Caco-2 (cell line): ENCODE measurements at regions of chr6 and their contacts with region 1.

Region 1: GRCh38 chr6:132669690-132670291 is 10.8 kb upstream of the TAAR1 start:
- DNase-seq: peak in 1 of 2 experiments; percentile 16
- H3K4me3 ChIP-seq: no peak overlapping the region
- H3K4me3 Mint-ChIP-seq: peak overlapping the region; percentile 22
- H3K27ac Mint-ChIP-seq: peak overlapping the region; percentile 40
- H3K4me1 ChIP-seq: peaks cover 42% of the 10 kb centered on the region
- H3K4me1 Mint-ChIP-seq: peaks cover 36% of the 10 kb centered on the region
- H3K27me3 ChIP-seq: no peaks in the 10 kb centered on the region
- H3K27me3 Mint-ChIP-seq: no peaks in the 10 kb centered on the region
- CTCF ChIP-seq: peak in 1 of 2 experiments; percentile 38

Region 2: DNA sequence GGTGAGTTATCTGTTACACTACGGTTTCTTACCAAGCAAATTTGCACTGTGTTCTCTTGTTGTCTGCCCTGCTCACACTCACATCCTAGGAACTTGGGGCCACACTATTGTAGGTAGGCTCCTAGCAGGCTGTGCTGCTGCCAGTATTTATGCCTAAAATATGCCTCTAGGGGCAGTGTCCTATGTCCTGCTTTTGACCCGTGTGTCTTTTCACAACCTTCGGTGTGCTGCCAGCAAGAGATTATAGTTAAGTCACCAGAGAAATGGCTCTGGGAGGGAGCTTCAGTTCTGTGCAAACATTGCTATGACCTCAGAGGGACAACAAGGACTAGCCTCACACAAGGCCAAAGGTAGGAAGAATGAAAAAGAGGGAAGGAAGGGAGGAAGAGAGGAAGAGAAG is 71.3 kb before region 1 on chr6:
- CTCF ChIA-PET with region 1: no interaction called
- POLR2A ChIA-PET with region 1: no interaction called
- intact Hi-C with region 1: loop called (anchors 1 kb)
- DNase-seq: peak; percentile 56 to 59
- H3K4me3 ChIP-seq: no peak overlapping the region
- H3K4me3 Mint-ChIP-seq: no peak overlapping the region
- H3K27ac Mint-ChIP-seq: no peak overlapping the region
- H3K4me1 ChIP-seq: peaks cover 6% of the 10 kb centered on the region; the same call in 1 of the 2 replicates
- H3K4me1 Mint-ChIP-seq: peaks cover 7% of the 10 kb centered on the region
- H3K27me3 ChIP-seq: no peaks in the 10 kb centered on the region
- H3K27me3 Mint-ChIP-seq: no peaks in the 10 kb centered on the region
- CTCF ChIP-seq: peak; percentile 35 to 38

Region 3: DNA sequence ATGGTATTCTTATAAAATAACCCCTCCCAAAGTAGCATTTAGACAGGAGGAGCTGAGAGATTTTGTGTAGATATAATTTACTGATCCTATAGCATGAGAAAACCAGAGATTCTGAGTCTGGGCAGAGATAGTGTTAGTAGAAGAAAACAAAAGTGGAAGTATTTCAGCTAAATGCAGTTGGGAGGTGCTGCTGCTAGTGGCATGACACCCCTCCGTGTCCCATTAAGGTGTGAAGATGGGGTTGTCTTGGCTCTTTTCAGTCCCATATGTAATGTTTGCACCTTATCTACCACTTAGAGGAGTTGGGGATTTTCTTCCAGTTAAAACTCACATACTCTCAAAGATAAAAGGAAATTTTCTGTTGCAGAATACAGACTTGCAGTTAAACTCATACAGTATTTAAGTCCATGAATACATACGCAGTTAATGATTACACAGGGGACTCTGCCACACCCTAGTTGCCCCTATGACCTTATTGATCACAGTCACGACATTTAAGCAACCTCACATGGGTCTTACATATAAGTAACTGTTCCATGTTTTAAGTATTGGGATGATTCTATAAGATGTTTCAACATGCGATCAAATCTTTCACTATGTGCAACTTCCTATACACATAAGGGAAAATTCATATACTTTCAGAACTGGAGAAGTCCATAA is 57.2 kb before region 1 on chr6:
- CTCF ChIA-PET with region 1: no interaction called
- POLR2A ChIA-PET with region 1: no interaction called
- intact Hi-C with region 1: loop called (anchors 2 kb)
- DNase-seq: peak; percentile 46 to 53
- H3K4me3 ChIP-seq: no peak overlapping the region
- H3K4me3 Mint-ChIP-seq: peak overlapping the region; percentile 48
- H3K27ac Mint-ChIP-seq: peak overlapping the region; percentile 40
- H3K4me1 ChIP-seq: peaks cover 37% of the 10 kb centered on the region
- H3K4me1 Mint-ChIP-seq: peaks cover 31% of the 10 kb centered on the region
- H3K27me3 ChIP-seq: no peaks in the 10 kb centered on the region
- H3K27me3 Mint-ChIP-seq: no peaks in the 10 kb centered on the region
- CTCF ChIP-seq: no peak

Region 4: DNA sequence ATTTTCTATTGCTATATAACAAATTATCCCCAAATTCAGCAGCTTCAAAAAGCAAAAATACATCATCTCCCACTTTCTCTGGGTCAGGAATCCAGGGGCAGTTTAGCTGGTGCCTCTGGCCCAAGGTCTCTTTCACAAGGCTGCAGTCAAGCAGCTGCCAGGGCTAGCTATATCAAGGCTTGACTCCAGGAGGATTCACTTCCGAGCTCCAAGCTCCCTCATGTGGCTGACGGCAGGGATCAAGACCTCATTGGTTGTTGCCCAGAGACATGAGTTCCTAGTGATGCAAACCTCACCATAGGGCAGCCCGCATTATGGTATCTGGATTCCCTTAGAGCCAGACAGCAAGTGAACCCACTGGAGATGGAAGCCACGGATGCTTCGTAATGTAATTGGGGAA is 45.4 kb after region 1 on chr6:
- CTCF ChIA-PET with region 1: interaction called, 14 read pairs
- POLR2A ChIA-PET with region 1: no interaction called
- intact Hi-C with region 1: loop called (anchors 1 kb)
- DNase-seq: peak; percentile 73 to 81
- H3K4me3 ChIP-seq: no peak overlapping the region
- H3K4me3 Mint-ChIP-seq: no peak overlapping the region
- H3K27ac Mint-ChIP-seq: no peak overlapping the region
- H3K4me1 ChIP-seq: peaks cover 9% of the 10 kb centered on the region
- H3K4me1 Mint-ChIP-seq: no peaks in the 10 kb centered on the region
- H3K27me3 ChIP-seq: no peaks in the 10 kb centered on the region
- H3K27me3 Mint-ChIP-seq: no peaks in the 10 kb centered on the region
- CTCF ChIP-seq: peak; percentile 53 to 70

Region 5: DNA sequence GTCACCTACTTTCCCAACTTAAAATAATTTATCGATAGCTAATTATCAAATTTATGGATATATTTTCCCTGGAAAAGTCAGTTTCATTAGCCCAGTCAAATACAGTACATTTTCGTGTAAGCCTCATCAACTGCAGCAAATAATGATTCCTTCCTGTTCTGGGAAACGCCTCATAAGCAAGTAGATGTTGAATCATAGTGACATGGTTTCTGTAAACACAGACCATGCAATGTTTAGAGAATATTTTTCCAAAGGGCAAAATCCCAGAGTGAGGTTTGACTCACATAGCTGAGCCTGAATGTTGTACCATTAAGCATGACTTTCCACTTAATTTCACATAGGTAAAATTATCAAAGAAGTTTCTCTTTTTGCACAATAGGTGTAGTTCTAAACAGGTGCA is 60.8 kb after region 1 on chr6:
- CTCF ChIA-PET with region 1: no interaction called
- POLR2A ChIA-PET with region 1: no interaction called
- intact Hi-C with region 1: no loop called
- DNase-seq: no peak
- H3K4me3 ChIP-seq: no peak overlapping the region
- H3K4me3 Mint-ChIP-seq: no peak overlapping the region
- H3K27ac Mint-ChIP-seq: no peak overlapping the region
- H3K4me1 ChIP-seq: no peaks in the 10 kb centered on the region
- H3K4me1 Mint-ChIP-seq: no peaks in the 10 kb centered on the region
- H3K27me3 ChIP-seq: no peaks in the 10 kb centered on the region
- H3K27me3 Mint-ChIP-seq: no peaks in the 10 kb centered on the region
- CTCF ChIP-seq: no peak

Region 6: GRCh38 chr6:132768051-132768517 is 98.3 kb after region 1 on chr6:
- CTCF ChIA-PET with region 1: interaction called, 3 read pairs
- POLR2A ChIA-PET with region 1: no interaction called
- intact Hi-C with region 1: loop called (anchors 1 kb)
- DNase-seq: peak; percentile 42 to 44
- H3K4me3 ChIP-seq: no peak overlapping the region
- H3K4me3 Mint-ChIP-seq: no peak overlapping the region
- H3K27ac Mint-ChIP-seq: no peak overlapping the region
- H3K4me1 ChIP-seq: no peaks in the 10 kb centered on the region
- H3K4me1 Mint-ChIP-seq: no peaks in the 10 kb centered on the region
- H3K27me3 ChIP-seq: no peaks in the 10 kb centered on the region
- H3K27me3 Mint-ChIP-seq: no peaks in the 10 kb centered on the region
- CTCF ChIP-seq: peak; percentile 22 to 55

Region 7: GRCh38 chr6:132798869-132799538 is 129.2 kb after region 1 on chr6:
- CTCF ChIA-PET with region 1: no interaction called
- POLR2A ChIA-PET with region 1: no interaction called
- intact Hi-C with region 1: loop called (anchors 5 kb)
- DNase-seq: peak; percentile 78 to 79
- H3K4me3 ChIP-seq: peak overlapping the region; percentile 55
- H3K4me3 Mint-ChIP-seq: no peak overlapping the region
- H3K27ac Mint-ChIP-seq: peak overlapping the region; percentile 66
- H3K4me1 ChIP-seq: no peaks in the 10 kb centered on the region
- H3K4me1 Mint-ChIP-seq: no peaks in the 10 kb centered on the region
- H3K27me3 ChIP-seq: no peaks in the 10 kb centered on the region
- H3K27me3 Mint-ChIP-seq: no peaks in the 10 kb centered on the region
- CTCF ChIP-seq: peak; percentile 72 to 85